ENCODE measurements at regions of chr14 and their contacts with region 1.

Region 1: GRCh38 chr14:31360919-31361662 is 59.3 kb downstream of the HEATR5A start:
- DNase-seq: no peak
- ATAC-seq: no peak
- H3K4me3 ChIP-seq: no peak overlapping the region
- H3K4me3 Mint-ChIP-seq: no peak overlapping the region
- H3K27ac ChIP-seq: no peak overlapping the region
- H3K27ac Mint-ChIP-seq: no peak overlapping the region
- H3K4me1 ChIP-seq: peaks cover 3% of the 10 kb centered on the region in 2 donors
- H3K4me1 Mint-ChIP-seq: peaks cover 5% of the 10 kb centered on the region
- H3K27me3 ChIP-seq: no peaks in the 10 kb centered on the region
- H3K27me3 Mint-ChIP-seq: no peaks in the 10 kb centered on the region
- CTCF ChIP-seq: no peak

Region 2: DNA sequence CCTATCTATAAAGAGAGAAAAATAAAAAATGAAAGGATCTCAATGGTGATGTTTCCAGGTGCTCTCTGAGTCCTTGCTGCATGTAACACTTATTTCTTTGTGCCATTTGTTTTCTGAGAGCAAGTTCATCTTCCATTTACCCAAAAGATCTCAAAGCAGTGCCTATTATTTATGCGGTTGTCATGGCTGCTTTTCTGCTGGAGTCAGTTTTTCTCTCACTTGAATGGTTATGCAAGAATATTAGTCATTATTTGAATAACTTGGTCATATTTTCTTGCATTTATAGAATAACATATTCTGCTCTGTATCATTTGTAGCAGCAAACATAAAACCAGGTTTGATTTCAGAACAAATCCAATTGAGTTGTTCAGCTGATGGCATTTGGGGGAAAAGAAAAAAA is 944.0 kb before region 1 on chr14:
- CTCF ChIA-PET with region 1: no interaction called
- POLR2A ChIA-PET with region 1: no interaction called
- intact Hi-C with region 1: no loop called
- DNase-seq: no peak
- ATAC-seq: no peak
- H3K4me3 ChIP-seq: no peak overlapping the region
- H3K4me3 Mint-ChIP-seq: no peak overlapping the region
- H3K27ac ChIP-seq: no peak overlapping the region
- H3K27ac Mint-ChIP-seq: no peak overlapping the region
- H3K4me1 ChIP-seq: no peaks in the 10 kb centered on the region
- H3K4me1 Mint-ChIP-seq: no peaks in the 10 kb centered on the region
- H3K27me3 ChIP-seq: no peaks in the 10 kb centered on the region
- H3K27me3 Mint-ChIP-seq: peaks cover 11% of the 10 kb centered on the region
- CTCF ChIP-seq: no peak

Region 3: DNA sequence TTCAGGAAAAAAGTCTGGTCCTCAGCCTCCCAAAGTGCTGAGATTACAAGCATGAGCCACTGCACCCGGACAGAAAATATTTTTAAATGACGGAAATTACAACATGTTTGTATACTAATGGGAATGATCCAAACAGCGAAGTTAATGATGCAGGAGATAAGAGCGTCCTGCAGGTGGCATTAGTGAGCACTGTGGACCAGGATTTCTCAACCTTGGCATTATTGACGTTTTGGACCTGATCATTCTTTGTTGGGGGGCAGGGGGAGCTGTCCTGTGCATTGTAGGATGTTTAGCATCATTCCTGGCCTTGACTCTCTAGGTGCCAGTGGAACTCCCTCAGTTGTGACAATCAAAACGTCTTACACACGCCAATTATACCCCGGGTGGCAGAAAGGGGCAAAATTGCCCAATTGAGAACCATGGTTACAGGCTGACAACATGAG is 704.9 kb before region 1 on chr14:
- CTCF ChIA-PET with region 1: interaction called, 3 read pairs
- POLR2A ChIA-PET with region 1: no interaction called
- intact Hi-C with region 1: loop called (anchors 1 kb)
- DNase-seq: peak; percentile 60
- ATAC-seq: peak; percentile 41
- H3K4me3 ChIP-seq: no peak overlapping the region
- H3K4me3 Mint-ChIP-seq: no peak overlapping the region
- H3K27ac ChIP-seq: no peak overlapping the region
- H3K27ac Mint-ChIP-seq: no peak overlapping the region
- H3K4me1 ChIP-seq: no peaks in the 10 kb centered on the region
- H3K4me1 Mint-ChIP-seq: no peaks in the 10 kb centered on the region
- H3K27me3 ChIP-seq: no peaks in the 10 kb centered on the region
- H3K27me3 Mint-ChIP-seq: no peaks in the 10 kb centered on the region
- CTCF ChIP-seq: peak; percentile 81

Region 4: DNA sequence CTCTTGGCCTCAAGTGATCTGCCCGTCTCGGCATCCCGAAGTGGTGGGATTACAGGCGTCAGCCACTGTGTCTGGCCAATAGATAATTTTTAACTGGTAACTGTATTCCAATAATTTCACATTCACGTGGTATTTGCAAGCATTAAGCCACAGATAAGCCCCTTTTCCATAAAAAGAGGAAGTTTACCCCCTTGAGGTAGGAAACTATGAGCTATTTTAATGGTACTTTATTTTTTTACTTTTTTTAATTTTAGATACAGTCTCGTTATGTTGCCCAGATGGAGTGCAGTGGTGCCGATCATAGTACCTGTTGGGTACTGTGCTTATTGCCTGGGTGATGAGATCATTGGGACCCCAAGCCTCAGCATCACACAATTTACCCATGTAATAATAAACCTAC is 378.6 kb before region 1 on chr14:
- CTCF ChIA-PET with region 1: interaction called, 3 read pairs
- POLR2A ChIA-PET with region 1: no interaction called
- intact Hi-C with region 1: loop called (anchors 1 kb)
- DNase-seq: peak; percentile 39
- ATAC-seq: peak; percentile 59
- H3K4me3 ChIP-seq: no peak overlapping the region
- H3K4me3 Mint-ChIP-seq: peak overlapping the region; percentile 39
- H3K27ac ChIP-seq: peak overlapping the region; percentile 3 to 67
- H3K27ac Mint-ChIP-seq: peak overlapping the region; percentile 82
- H3K4me1 ChIP-seq: peaks cover 27 to 29% of the 10 kb centered on the region in 2 donors
- H3K4me1 Mint-ChIP-seq: peaks cover 48% of the 10 kb centered on the region
- H3K27me3 ChIP-seq: no peaks in the 10 kb centered on the region
- H3K27me3 Mint-ChIP-seq: no peaks in the 10 kb centered on the region
- CTCF ChIP-seq: no peak

Region 5: DNA sequence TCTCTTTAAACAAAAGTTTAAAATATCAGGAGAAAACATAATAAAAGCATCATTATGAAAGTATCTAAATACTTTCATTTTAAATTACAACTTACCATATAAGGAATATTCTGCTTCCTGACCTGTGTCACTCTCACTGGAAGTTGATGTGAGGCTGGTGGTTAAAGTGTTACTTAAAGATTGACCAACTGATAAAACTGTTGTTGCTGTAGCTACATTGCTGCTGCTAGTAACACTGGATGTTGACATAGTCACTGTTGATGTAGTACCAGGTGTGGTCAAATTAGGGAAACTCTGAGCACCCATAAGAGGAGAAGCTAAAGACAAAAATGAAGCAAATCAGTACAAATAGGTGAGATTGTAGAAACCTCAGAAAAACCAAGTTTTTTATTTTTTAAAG is 233.4 kb before region 1 on chr14:
- CTCF ChIA-PET with region 1: interaction called, 3 read pairs
- POLR2A ChIA-PET with region 1: no interaction called
- intact Hi-C with region 1: loop called (anchors 1 kb)
- DNase-seq: no peak
- ATAC-seq: no peak
- H3K4me3 ChIP-seq: no peak overlapping the region
- H3K4me3 Mint-ChIP-seq: no peak overlapping the region
- H3K27ac ChIP-seq: peak overlapping the region in 1 of 2 donors; percentile 29
- H3K27ac Mint-ChIP-seq: no peak overlapping the region
- H3K4me1 ChIP-seq: peaks cover 9 to 10% of the 10 kb centered on the region in 2 donors
- H3K4me1 Mint-ChIP-seq: peaks cover 16% of the 10 kb centered on the region
- H3K27me3 ChIP-seq: no peaks in the 10 kb centered on the region
- H3K27me3 Mint-ChIP-seq: no peaks in the 10 kb centered on the region
- CTCF ChIP-seq: no peak

Region 6: GRCh38 chr14:31180299-31181051 is 180.6 kb before region 1 on chr14:
- CTCF ChIA-PET with region 1: interaction called, 3 read pairs
- POLR2A ChIA-PET with region 1: no interaction called
- intact Hi-C with region 1: loop called (anchors 5 kb)
- DNase-seq: no peak
- ATAC-seq: no peak
- H3K4me3 ChIP-seq: no peak overlapping the region
- H3K4me3 Mint-ChIP-seq: no peak overlapping the region
- H3K27ac ChIP-seq: no peak overlapping the region
- H3K27ac Mint-ChIP-seq: peak overlapping the region; percentile 20
- H3K4me1 ChIP-seq: no peaks in the 10 kb centered on the region
- H3K4me1 Mint-ChIP-seq: peaks cover 7% of the 10 kb centered on the region
- H3K27me3 ChIP-seq: no peaks in the 10 kb centered on the region
- H3K27me3 Mint-ChIP-seq: no peaks in the 10 kb centered on the region
- CTCF ChIP-seq: no peak

Region 7: GRCh38 chr14:31346097-31346496 is 15.0 kb before region 1 on chr14:
- CTCF ChIA-PET with region 1: no interaction called
- POLR2A ChIA-PET with region 1: no interaction called
- intact Hi-C with region 1: no loop called
- DNase-seq: no peak
- ATAC-seq: no peak
- H3K4me3 ChIP-seq: no peak overlapping the region
- H3K4me3 Mint-ChIP-seq: no peak overlapping the region
- H3K27ac ChIP-seq: no peak overlapping the region
- H3K27ac Mint-ChIP-seq: no peak overlapping the region
- H3K4me1 ChIP-seq: no peaks in the 10 kb centered on the region
- H3K4me1 Mint-ChIP-seq: no peaks in the 10 kb centered on the region
- H3K27me3 ChIP-seq: no peaks in the 10 kb centered on the region
- H3K27me3 Mint-ChIP-seq: no peaks in the 10 kb centered on the region
- CTCF ChIP-seq: no peak

Measured in B cell (primary cell).